Activated naive CD4-positive, alpha-beta T cell treated with anti-CD3 and anti-CD28 coated beads for 36 hours (primary cell): ENCODE measurements at regions of chr1 and their contacts with region 1.

Region 1: DNA sequence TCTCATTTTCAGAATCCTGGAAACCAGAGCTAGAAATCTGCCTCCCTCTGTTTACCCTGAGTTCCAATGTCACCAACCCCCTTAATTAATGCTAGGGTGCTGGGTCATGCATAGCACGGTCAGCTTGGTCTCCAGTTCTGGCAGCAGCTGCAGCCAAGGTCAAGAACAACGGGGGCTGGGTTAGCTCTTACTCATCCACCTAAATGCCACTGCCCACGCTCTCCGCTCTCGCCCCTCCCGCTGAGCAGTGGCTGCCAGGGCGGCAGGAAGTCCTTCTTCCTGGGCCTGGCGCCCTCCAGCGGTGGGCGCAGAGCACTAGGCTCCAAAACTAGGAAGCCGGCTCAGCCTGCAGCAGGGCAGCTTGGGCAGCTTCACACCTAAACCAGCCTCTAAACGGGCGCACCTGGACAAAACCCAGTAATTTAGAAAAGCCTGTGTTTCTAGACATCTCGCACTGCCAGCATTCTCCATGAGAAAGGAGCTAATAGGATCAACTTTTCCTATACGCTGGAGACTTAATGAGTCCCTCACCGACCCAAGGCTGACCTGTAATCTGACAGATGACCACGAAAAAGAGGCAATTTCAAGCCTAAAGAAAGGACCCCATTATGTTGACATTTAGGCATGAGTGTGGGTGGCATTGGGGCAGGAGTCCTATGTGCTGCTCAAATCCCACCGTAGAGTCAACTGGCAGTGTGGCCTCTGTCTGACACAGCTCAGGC is 78.3 kb upstream of the LRRN2 start:
- DNase-seq: peak; percentile 85
- H3K4me3 Mint-ChIP-seq: no peak overlapping the region
- H3K27ac Mint-ChIP-seq: no peak overlapping the region
- H3K4me1 Mint-ChIP-seq: peaks cover 6% of the 10 kb centered on the region
- H3K27me3 Mint-ChIP-seq: peaks cover 3% of the 10 kb centered on the region

Region 2: DNA sequence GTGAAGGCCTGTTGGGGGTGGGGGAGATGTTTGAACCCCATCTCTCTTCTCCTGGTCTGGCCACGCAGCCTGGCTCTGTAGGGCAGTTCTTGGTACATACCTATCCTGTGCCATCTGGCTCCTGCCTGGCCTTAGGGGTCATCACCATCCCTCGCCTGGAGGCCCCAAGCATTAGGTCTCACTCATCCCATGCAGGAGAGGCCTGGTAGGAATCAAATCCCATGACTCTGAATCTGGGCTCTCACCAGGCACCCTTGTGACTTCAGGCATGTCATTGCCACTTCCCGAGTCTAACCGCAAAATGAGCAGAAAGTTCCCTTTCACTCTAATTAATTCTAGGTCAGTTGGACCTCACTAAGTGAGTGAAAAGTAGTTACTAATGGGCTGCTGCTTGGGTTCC is 649.3 kb before region 1 on chr1:
- CTCF ChIA-PET with region 1: no interaction called
- intact Hi-C with region 1: no loop called
- DNase-seq: no peak
- H3K4me3 Mint-ChIP-seq: no peak overlapping the region
- H3K27ac Mint-ChIP-seq: no peak overlapping the region
- H3K4me1 Mint-ChIP-seq: no peaks in the 10 kb centered on the region
- H3K27me3 Mint-ChIP-seq: no peaks in the 10 kb centered on the region

Region 3: DNA sequence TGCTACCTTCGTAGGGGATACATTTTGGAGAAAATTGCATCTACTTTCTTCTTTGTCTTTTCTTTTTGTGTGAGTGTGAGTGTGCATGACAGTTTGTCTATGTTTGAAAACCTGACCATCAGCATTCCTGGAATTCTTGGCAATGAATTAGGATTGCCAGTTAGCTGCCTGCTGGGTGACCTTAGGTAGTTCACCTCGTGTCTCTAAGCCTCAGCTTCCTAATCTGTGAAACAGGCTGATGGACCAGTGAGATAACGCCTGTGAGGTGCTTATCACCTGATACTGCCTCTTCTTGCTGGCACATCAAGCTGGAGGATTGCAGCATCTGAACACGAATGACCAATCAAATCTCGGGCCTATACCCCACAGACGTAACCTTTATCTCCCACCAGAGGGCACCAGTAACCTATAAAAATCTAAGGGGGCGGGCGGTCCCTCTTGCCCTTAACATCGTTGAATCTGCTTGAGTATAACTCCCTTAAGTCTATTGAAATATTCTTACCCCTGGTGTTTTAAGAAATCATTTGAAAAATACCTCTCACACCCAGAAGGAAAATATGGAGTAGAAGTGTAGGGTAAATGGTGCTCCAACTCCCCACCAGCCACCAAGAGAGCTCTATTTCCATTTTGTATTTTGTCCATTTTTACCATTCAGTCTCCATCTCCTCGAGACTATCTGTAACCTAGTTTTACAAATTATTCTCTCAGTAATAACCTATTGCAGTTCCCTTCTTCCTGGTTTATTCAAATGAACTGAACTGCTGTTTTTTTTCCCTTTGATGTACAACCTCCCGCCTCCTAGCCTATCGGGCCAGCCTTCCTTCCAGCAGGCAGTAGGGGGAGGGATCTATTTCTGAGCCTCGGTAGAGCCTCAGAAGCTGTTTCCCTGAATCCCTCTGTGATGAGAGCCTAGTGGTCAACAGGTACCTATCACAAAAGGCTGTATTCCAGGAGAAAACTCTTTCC is 198.0 kb before region 1 on chr1:
- CTCF ChIA-PET with region 1: interaction called, 44 read pairs
- intact Hi-C with region 1: loop called (anchors 1 kb)
- DNase-seq: peak; percentile 76
- H3K4me3 Mint-ChIP-seq: no peak overlapping the region
- H3K27ac Mint-ChIP-seq: no peak overlapping the region
- H3K4me1 Mint-ChIP-seq: peaks cover 45% of the 10 kb centered on the region
- H3K27me3 Mint-ChIP-seq: no peaks in the 10 kb centered on the region

Region 4: DNA sequence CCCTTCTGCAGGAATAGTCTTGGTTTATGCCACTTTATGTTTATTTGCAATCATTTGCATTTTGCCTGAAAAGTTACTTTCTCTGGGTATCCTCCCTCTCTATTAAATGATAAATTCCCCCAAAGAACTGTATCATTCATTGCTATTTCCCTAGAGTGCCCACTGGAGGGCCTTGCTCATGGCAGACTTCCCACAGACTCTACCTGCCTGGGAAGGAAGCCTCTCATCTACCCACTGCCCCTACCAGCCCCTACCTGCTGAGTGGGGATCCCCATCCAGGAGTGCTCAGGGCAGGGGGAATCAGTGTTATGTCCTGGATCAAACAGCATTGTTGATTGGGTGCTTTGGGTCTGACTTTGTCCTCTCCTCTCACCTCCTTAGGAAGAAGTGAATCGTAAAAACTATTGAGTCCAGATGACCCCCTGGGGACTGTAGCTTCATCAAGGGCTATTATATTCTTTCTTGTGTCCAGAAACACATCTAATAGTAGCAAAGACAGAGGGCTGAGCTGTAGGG is 71.5 kb before region 1 on chr1:
- CTCF ChIA-PET with region 1: interaction called, 4 read pairs
- intact Hi-C with region 1: loop called (anchors 5 kb)
- DNase-seq: no peak
- H3K4me3 Mint-ChIP-seq: no peak overlapping the region
- H3K27ac Mint-ChIP-seq: no peak overlapping the region
- H3K4me1 Mint-ChIP-seq: peaks cover 9% of the 10 kb centered on the region
- H3K27me3 Mint-ChIP-seq: peaks cover 2% of the 10 kb centered on the region

Region 5: DNA sequence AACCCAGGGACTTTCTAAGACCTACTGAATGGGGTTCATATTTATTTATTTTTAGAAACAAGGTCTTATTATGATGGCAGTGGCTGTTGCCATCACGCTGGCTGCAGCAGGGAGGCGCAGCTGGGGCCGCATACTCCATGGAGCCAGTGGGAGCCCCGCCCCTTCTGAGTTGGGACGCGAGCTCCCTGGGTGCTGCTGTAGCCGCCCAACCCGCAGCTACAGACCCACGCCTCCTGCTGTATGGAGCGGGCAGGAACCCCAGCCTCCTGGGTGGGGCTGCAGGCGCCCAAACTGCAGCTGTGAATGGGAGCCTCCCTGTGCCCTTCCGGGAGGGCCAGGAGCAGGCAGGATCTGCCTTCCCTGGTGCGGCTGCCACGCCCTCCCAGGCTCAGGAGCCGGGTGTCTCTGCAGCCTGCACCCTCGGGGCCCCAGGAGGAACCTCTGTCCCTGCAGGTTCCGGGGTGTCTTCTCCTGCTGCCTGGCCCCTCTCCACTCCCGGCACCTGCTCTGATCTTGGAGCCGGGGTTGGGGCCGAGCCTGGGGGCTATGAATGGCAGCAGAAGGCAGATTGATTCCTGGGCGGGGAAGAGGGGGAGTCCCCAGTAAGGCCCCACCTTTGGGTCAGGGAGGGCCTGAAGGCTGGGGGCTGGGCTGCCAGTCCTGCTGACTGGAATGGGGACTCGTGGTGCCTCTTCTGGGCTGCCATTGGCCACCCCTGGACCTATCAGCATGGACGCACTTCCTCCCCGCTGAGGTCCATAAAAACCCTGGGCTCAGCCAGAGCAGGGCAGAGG is 11.8 kb before region 1 on chr1:
- CTCF ChIA-PET with region 1: interaction called, 34 read pairs
- intact Hi-C with region 1: loop called (anchors 2 kb)
- DNase-seq: no peak
- H3K4me3 Mint-ChIP-seq: no peak overlapping the region
- H3K27ac Mint-ChIP-seq: no peak overlapping the region
- H3K4me1 Mint-ChIP-seq: no peaks in the 10 kb centered on the region
- H3K27me3 Mint-ChIP-seq: no peaks in the 10 kb centered on the region